ENCODE measurements at regions of chr1 and their contacts with region 1.

Region 1: DNA sequence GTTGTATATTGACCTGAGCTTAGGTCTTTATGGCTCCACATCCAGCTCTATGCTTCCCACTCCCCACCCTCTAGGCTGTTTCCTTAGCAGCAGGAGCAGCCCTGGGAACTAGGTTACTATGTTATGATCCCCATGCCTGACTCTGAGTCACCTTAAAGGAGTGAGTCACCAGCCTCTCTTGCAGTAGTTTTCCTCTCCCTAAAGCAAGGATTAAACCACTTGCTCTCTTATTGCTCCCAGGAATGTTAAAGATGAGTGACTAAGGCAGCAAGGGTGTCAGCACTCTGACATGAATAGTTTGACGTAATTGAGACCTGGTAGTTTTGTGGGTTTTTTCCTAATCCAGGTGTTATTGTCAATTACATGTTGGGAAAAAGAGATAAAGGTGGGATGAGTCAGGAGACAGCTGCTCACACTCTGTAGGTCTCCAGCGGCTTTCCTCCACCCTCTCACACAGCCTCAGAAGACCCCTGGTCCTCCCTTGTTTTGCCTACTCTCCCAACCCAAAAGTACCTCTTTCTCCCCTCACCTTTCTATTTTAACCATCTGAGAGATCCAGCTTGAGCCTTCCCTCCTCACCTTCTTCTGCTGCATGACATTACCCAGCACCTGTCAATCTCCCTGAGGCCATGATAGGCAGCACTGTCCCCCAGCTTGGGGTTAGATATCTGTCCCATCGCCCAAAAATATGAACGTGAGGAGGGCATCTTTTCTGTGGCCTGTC is 369.1 kb upstream of the VAMP3 start:
- DNase-seq: peak; percentile 95 to 98
- ATAC-seq: peak; percentile 97 to 99
- H3K4me3 ChIP-seq: no peak overlapping the region
- H3K27ac ChIP-seq: peak overlapping the region; percentile 99 to 100
- H3K4me1 ChIP-seq: peaks cover 32% of the 10 kb centered on the region
- CTCF ChIP-seq: no peak
- EP300 ChIP-seq: peak; percentile 98
- POLR2A ChIP-seq: no peak
- RAD21 ChIP-seq: peak; percentile 38 to 67; a peak in 4 of 5 replicates

Region 2: DNA sequence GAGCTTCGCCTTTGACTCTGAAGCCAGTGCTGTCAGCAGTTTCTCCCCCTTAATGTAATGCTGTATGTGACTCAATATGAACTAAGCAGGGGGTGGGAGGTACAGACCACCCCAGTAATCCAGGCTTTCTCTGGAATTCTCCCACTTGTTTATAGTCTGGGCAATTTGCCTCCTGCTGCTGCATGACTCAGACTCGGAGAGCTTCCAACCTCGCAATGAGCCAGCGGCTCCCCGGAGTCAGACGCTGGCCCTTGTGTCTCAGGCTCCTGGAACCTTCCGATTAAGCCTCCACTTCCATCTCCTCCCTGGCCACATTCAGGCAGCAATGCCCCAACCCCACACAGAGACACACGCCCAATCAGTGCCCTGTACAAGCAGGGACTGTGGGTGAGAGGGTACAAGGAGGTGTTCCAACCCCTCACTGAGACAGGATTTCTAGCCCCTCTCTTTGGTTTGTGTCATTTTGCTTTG is 102.6 kb before region 1 on chr1:
- CTCF ChIA-PET with region 1: interaction called, 10 read pairs
- POLR2A ChIA-PET with region 1: no interaction called
- DNase-seq: peak; percentile 65 to 96
- ATAC-seq: peak; percentile 88 to 89
- H3K4me3 ChIP-seq: no peak overlapping the region
- H3K27ac ChIP-seq: peak overlapping the region; percentile 97 to 98
- H3K4me1 ChIP-seq: peaks cover 67% of the 10 kb centered on the region
- CTCF ChIP-seq: no peak
- EP300 ChIP-seq: peak; percentile 97 to 98
- POLR2A ChIP-seq: no peak
- RAD21 ChIP-seq: peak; percentile 44 to 75

Region 3: GRCh38 chr1:7388479-7389185 is 13.3 kb before region 1 on chr1:
- CTCF ChIA-PET with region 1: no interaction called
- POLR2A ChIA-PET with region 1: no interaction called
- DNase-seq: no peak
- ATAC-seq: peak in 1 of 2 experiments; percentile 28; a peak in 2 of 6 replicates
- H3K4me3 ChIP-seq: no peak overlapping the region
- H3K27ac ChIP-seq: peak overlapping the region; percentile 24 to 83; a peak in 4 of 6 replicates
- H3K4me1 ChIP-seq: peaks cover 12% of the 10 kb centered on the region; the same call in 1 of the 3 replicates
- CTCF ChIP-seq: no peak
- EP300 ChIP-seq: no peak
- POLR2A ChIP-seq: no peak
- RAD21 ChIP-seq: no peak

Measured in A549 (cell line).